ENCODE measurements at regions of chr7 and their contacts with region 1.

Region 1: DNA sequence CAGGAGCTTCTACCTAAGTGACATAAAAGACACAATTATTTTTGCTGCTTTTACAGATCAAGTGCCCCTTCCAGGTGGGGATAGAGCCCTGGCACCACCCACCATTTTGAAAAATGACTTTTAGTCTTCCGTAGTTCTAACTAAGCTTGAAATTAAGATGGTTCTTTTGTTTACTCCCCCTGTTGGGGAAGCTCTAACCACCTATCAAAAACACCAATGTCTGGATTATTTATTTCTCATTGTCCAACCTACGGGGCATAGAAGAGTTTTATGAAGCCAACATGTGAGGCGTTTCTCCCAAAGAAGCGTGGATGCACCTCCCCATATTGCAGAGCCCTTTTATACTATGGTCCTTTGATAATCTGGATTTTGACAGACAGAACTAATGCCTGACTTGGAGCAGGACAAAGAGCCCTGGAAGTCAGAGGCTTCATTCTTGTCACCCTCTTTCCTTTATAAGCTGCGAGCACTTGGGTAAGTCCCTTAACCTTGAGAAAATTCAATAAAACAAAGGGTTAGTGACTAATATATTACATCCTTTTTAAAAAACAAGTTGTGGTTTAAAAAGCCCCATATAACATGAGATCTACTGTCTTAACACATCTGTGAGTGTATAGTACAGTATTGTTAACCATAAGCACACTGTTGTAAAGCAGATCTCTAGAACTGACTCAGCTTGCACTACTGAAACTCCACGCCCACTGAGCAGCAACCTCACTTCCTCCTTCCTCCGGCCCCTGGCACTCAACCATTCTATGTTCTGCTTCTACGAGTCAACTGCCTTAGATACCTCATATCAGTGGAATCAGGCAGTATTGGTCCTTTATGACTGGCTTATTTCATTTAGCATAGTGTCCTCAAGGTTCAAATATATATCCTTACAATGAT is 67.5 kb downstream of the ATXN7L1 start:
- DNase-seq: peak; percentile 96
- H3K4me3 Mint-ChIP-seq: no peak overlapping the region
- H3K27ac Mint-ChIP-seq: peak overlapping the region; percentile 38
- H3K4me1 Mint-ChIP-seq: peaks cover 58% of the 10 kb centered on the region
- H3K27me3 Mint-ChIP-seq: peaks cover 3% of the 10 kb centered on the region

Region 2: DNA sequence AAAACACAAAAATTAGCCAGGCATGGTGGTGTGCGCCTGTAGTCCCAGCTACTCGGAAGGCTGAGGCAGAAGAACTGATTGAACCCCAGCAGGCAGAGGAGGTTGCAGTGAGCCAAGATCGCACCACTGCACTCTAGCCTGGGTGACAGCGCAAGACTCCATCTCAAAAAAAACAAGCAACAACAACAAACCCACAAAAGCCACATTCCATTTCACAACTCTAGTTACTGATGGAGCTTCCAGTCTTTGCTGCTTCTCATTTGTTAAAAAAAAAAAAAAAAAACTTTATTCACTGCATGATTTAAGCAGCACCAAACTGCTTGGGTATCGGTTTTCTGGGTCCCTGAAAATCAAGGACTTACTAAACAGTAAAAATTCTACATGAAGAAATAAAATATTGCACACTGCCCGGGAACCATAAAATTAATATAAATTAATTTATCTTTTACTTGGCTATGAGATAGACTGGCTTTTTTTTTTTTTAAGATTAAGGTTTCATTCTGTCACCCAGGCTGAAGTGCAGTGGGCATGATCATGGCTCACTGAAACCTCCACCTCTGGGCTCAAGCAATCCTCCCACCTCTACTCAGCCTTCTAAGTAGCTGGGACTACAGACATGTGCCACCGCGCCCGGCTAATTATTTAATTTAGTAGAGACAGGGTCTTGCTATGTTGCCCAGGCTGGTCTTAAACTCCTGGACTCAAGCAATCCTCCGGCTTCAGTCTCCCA is 462.2 kb before region 1 on chr7:
- CTCF ChIA-PET with region 1: no interaction called
- intact Hi-C with region 1: loop called (anchors 1 kb)
- DNase-seq: no peak
- H3K4me3 Mint-ChIP-seq: no peak overlapping the region
- H3K27ac Mint-ChIP-seq: no peak overlapping the region
- H3K4me1 Mint-ChIP-seq: peaks cover 66% of the 10 kb centered on the region
- H3K27me3 Mint-ChIP-seq: no peaks in the 10 kb centered on the region

Region 3: DNA sequence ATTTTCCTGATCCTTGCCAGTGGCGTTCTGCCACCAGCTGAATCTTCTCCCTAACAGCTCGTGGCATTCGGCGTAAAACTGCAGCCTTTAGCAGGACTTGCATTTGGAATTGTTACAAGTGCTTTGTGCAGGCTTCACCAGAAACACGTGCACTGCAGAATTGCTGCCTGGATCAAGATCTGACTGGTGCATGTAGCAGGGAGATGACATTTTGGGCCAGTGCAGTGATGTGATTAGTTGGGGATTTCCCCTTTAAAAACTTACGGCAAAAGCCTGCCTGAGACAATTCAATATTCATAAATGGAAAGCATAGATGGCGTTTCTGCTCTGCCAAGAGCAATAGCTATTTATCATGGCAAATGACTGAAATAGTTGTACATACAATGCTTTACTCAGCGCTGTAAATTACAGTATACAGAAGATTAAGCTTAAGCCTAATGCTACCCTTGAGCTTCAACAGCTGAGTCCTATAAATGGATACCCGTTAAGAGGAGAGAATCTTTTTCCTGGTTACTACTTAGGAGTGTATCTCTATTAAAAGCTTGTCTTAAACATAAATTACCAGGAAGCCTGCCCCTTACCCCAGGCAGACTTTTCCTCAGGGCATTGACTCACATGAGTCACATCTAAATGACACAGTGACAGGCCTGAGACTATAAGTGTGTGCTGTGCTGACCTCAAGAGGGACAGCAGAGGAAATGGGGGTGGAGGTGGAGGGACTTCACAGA is 38.9 kb before region 1 on chr7:
- CTCF ChIA-PET with region 1: interaction called, 7 read pairs
- intact Hi-C with region 1: loop called (anchors 1 kb)
- DNase-seq: peak; percentile 39
- H3K4me3 Mint-ChIP-seq: no peak overlapping the region
- H3K27ac Mint-ChIP-seq: no peak overlapping the region
- H3K4me1 Mint-ChIP-seq: peaks cover 26% of the 10 kb centered on the region
- H3K27me3 Mint-ChIP-seq: no peaks in the 10 kb centered on the region

Region 4: DNA sequence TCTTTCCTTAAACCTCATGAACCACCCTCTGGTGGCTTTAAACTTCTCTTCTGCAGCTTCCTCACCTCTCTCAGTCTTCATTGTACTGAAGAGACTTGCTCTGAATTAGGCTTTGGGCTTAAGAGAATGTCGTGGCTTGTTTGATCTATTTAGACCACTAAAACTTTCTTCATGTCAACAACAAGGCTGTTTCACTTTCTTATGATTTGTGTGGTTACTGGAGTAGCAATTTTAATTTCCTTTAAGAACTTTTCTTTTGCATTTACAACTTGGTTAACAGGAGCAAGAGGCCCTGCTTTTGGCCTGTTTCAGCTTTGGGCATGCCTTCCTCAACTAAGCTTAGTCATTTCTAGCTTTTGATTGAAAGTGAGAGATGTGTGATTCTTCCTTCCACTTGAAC is 116.0 kb after region 1 on chr7:
- CTCF ChIA-PET with region 1: interaction called, 6 read pairs
- intact Hi-C with region 1: loop called (anchors 1 kb)
- DNase-seq: peak; percentile 60
- H3K4me3 Mint-ChIP-seq: no peak overlapping the region
- H3K27ac Mint-ChIP-seq: peak overlapping the region; percentile 9
- H3K4me1 Mint-ChIP-seq: peaks cover 26% of the 10 kb centered on the region
- H3K27me3 Mint-ChIP-seq: peaks cover 2% of the 10 kb centered on the region

Region 5: GRCh38 chr7:106112117-106112971 is 303.4 kb after region 1 on chr7 and contains the start of gene SYPL1:
- CTCF ChIA-PET with region 1: no interaction called
- intact Hi-C with region 1: loop called (anchors 1 kb)
- DNase-seq: peak; percentile 94
- H3K4me3 Mint-ChIP-seq: peak within 1 kb of the TSS; percentile 85
- H3K27ac Mint-ChIP-seq: peak within 1 kb of the TSS; percentile 92
- H3K4me1 Mint-ChIP-seq: peaks cover 71% of the 10 kb centered on the region
- H3K27me3 Mint-ChIP-seq: no peaks in the 10 kb centered on the region
- total RNA-seq, gene SYPL1: 24.7 to 26.6 TPM

Region 6: GRCh38 chr7:106485031-106485551 is 676.1 kb after region 1 on chr7:
- CTCF ChIA-PET with region 1: no interaction called
- intact Hi-C with region 1: loop called (anchors 2 kb)
- DNase-seq: peak; percentile 26
- H3K4me3 Mint-ChIP-seq: no peak overlapping the region
- H3K27ac Mint-ChIP-seq: peak overlapping the region; percentile 81
- H3K4me1 Mint-ChIP-seq: peaks cover 57% of the 10 kb centered on the region
- H3K27me3 Mint-ChIP-seq: peaks cover 23% of the 10 kb centered on the region

Measured in activated naive CD4-positive, alpha-beta T cell treated with anti-CD3 and anti-CD28 coated beads for 36 hours (primary cell).